Caco-2 (cell line): ENCODE measurements at regions of chr16 and their contacts with region 1.

Region 1: DNA sequence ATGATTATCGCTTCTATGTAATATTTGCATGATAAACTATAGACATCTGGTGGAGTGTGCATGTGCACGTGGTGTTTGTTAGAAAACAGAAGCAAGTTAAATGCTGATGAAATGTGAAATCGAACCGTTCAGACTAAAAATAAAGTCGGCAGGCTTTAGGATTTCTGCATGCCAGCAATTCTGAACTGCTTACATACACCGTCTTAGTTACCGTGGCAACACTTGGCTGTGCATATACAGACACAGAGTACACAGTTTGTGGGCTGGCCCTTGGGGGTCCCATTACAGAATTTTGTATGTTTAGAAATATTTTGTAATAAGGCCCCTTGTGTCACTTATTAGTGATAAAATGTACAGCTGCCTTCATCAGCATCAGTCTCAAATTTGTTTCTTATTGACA is 605.5 kb downstream of the RBFOX1 start:
- DNase-seq: no peak
- H3K4me3 ChIP-seq: no peak overlapping the region
- H3K4me3 Mint-ChIP-seq: no peak overlapping the region
- H3K27ac Mint-ChIP-seq: no peak overlapping the region
- H3K4me1 ChIP-seq: no peaks in the 10 kb centered on the region
- H3K4me1 Mint-ChIP-seq: no peaks in the 10 kb centered on the region
- H3K27me3 ChIP-seq: no peaks in the 10 kb centered on the region
- H3K27me3 Mint-ChIP-seq: peaks cover 3% of the 10 kb centered on the region
- CTCF ChIP-seq: no peak

Region 2: GRCh38 chr16:7888411-7888810 is 49.8 kb before region 1 on chr16:
- CTCF ChIA-PET with region 1: no interaction called
- POLR2A ChIA-PET with region 1: no interaction called
- intact Hi-C with region 1: loop called (anchors 2 kb)
- DNase-seq: no peak
- H3K4me3 ChIP-seq: no peak overlapping the region
- H3K4me3 Mint-ChIP-seq: no peak overlapping the region
- H3K27ac Mint-ChIP-seq: no peak overlapping the region
- H3K4me1 ChIP-seq: no peaks in the 10 kb centered on the region
- H3K4me1 Mint-ChIP-seq: no peaks in the 10 kb centered on the region
- H3K27me3 ChIP-seq: no peaks in the 10 kb centered on the region
- H3K27me3 Mint-ChIP-seq: peaks cover 17% of the 10 kb centered on the region
- CTCF ChIP-seq: no peak